Naive thymus-derived CD4-positive, alpha-beta T cell (primary cell): ENCODE measurements at regions of chr11 and their contacts with region 1.

Region 1: GRCh38 chr11:32893343-32894148 is 935 bp downstream of the QSER1 start:
- DNase-seq: peak in 6 of 9 donors; percentile 34 to 67 (median 42)
- ATAC-seq: peak; percentile 47
- H3K4me3 ChIP-seq: peak overlapping the region; percentile 71
- H3K4me3 Mint-ChIP-seq: peak overlapping the region; percentile 83 to 96 (median 94)
- H3K27ac ChIP-seq: peak overlapping the region; percentile 71
- H3K27ac Mint-ChIP-seq: peak overlapping the region; percentile 58 to 95 (median 80)
- H3K4me1 ChIP-seq: peaks cover 5 to 15% of the 10 kb centered on the region in 2 donors
- H3K4me1 Mint-ChIP-seq: peaks cover 26 to 46% (median 38%) of the 10 kb centered on the region in 7 donors
- H3K27me3 ChIP-seq: no peaks in the 10 kb centered on the region
- H3K27me3 Mint-ChIP-seq: peaks cover 0 to 21% (median 0%) of the 10 kb centered on the region in 5 donors

Region 2: GRCh38 chr11:32792948-32793475 is 100.5 kb before region 1 on chr11:
- CTCF ChIA-PET with region 1: no interaction called
- POLR2A ChIA-PET with region 1: interaction called, 3 read pairs
- intact Hi-C with region 1: loop called in 1 of 2 experiments (anchors 1 kb)
- DNase-seq: peak; percentile 30 to 60 (median 49)
- ATAC-seq: peak; percentile 82
- H3K4me3 ChIP-seq: peak overlapping the region; percentile 38
- H3K4me3 Mint-ChIP-seq: peak overlapping the region in 7 of 10 donors; percentile 48 to 80 (median 56)
- H3K27ac ChIP-seq: no peak overlapping the region
- H3K27ac Mint-ChIP-seq: peak overlapping the region in 1 of 9 donors; percentile 59
- H3K4me1 ChIP-seq: no peaks in the 10 kb centered on the region
- H3K4me1 Mint-ChIP-seq: peaks cover 0 to 8% (median 5%) of the 10 kb centered on the region in 7 donors
- H3K27me3 ChIP-seq: no peaks in the 10 kb centered on the region
- H3K27me3 Mint-ChIP-seq: peaks cover 4 to 31% (median 9%) of the 10 kb centered on the region in 5 donors

Region 3: GRCh38 chr11:32960553-32961164 is 67.1 kb after region 1 on chr11:
- CTCF ChIA-PET with region 1: no interaction called
- POLR2A ChIA-PET with region 1: no interaction called
- intact Hi-C with region 1: loop called in 1 of 2 experiments (anchors 5 kb)
- DNase-seq: peak in 7 of 9 donors; percentile 33 to 66 (median 55)
- ATAC-seq: peak; percentile 67
- H3K4me3 ChIP-seq: no peak overlapping the region
- H3K4me3 Mint-ChIP-seq: no peak overlapping the region
- H3K27ac ChIP-seq: no peak overlapping the region
- H3K27ac Mint-ChIP-seq: no peak overlapping the region
- H3K4me1 ChIP-seq: no peaks in the 10 kb centered on the region
- H3K4me1 Mint-ChIP-seq: peaks cover 0 to 5% (median 0%) of the 10 kb centered on the region in 7 donors
- H3K27me3 ChIP-seq: no peaks in the 10 kb centered on the region
- H3K27me3 Mint-ChIP-seq: no peaks in the 10 kb centered on the region

Region 4: GRCh38 chr11:33065445-33066178 is 172.1 kb after region 1 on chr11:
- CTCF ChIA-PET with region 1: interaction called, 3 read pairs
- POLR2A ChIA-PET with region 1: no interaction called
- intact Hi-C with region 1: loop called in 1 of 2 experiments (anchors 2 kb)
- DNase-seq: peak; percentile 62 to 83 (median 76)
- ATAC-seq: peak; percentile 91
- H3K4me3 ChIP-seq: no peak overlapping the region
- H3K4me3 Mint-ChIP-seq: peak overlapping the region in 2 of 10 donors; percentile 42 to 43
- H3K27ac ChIP-seq: no peak overlapping the region
- H3K27ac Mint-ChIP-seq: peak overlapping the region in 4 of 9 donors; percentile 14 to 83 (median 58)
- H3K4me1 ChIP-seq: peaks cover 0 to 21% of the 10 kb centered on the region in 2 donors
- H3K4me1 Mint-ChIP-seq: peaks cover 24 to 36% (median 29%) of the 10 kb centered on the region in 7 donors
- H3K27me3 ChIP-seq: no peaks in the 10 kb centered on the region
- H3K27me3 Mint-ChIP-seq: no peaks in the 10 kb centered on the region

Region 5: DNA sequence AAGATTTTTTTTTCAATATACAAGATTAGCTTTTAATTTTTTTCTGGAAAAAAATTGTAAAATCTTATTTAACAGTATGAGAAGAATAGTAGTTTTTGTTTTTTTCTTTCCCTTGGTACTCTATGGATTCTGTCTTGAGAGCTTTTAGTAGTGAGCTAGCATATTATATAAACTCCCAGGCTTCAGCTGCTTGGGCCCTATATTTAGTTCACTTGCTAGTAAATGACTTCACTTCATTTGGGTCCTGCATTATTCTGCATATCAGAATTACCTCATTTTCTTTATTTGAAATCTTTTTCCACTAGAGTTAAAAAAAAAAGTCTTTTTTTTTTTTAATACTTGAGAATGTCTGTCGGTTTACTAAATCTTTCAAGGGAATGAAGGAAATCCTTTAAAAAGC is 396.8 kb after region 1 on chr11:
- CTCF ChIA-PET with region 1: no interaction called
- POLR2A ChIA-PET with region 1: no interaction called
- intact Hi-C with region 1: no loop called
- DNase-seq: no peak
- ATAC-seq: no peak
- H3K4me3 ChIP-seq: no peak overlapping the region
- H3K4me3 Mint-ChIP-seq: no peak overlapping the region
- H3K27ac ChIP-seq: no peak overlapping the region
- H3K27ac Mint-ChIP-seq: no peak overlapping the region
- H3K4me1 ChIP-seq: no peaks in the 10 kb centered on the region
- H3K4me1 Mint-ChIP-seq: peaks cover 3 to 51% (median 43%) of the 10 kb centered on the region in 7 donors
- H3K27me3 ChIP-seq: no peaks in the 10 kb centered on the region
- H3K27me3 Mint-ChIP-seq: no peaks in the 10 kb centered on the region

Region 6: GRCh38 chr11:33773987-33774735 is 880.6 kb after region 1 on chr11 and contains the start of gene FBXO3:
- CTCF ChIA-PET with region 1: no interaction called
- POLR2A ChIA-PET with region 1: no interaction called
- intact Hi-C with region 1: loop called (anchors 1 kb)
- DNase-seq: peak; percentile 71 to 91 (median 88)
- ATAC-seq: peak; percentile 98
- H3K4me3 ChIP-seq: peak within 1 kb of the TSS; percentile 91
- H3K4me3 Mint-ChIP-seq: peak within 1 kb of the TSS; percentile 93 to 99 (median 97)
- H3K27ac ChIP-seq: peak within 1 kb of the TSS; percentile 83
- H3K27ac Mint-ChIP-seq: peak within 1 kb of the TSS; percentile 93 to 98 (median 96)
- H3K4me1 ChIP-seq: peaks cover 20 to 23% of the 10 kb centered on the region in 2 donors
- H3K4me1 Mint-ChIP-seq: peaks cover 33 to 58% (median 45%) of the 10 kb centered on the region in 7 donors
- H3K27me3 ChIP-seq: no peaks in the 10 kb centered on the region
- H3K27me3 Mint-ChIP-seq: peaks cover 0 to 34% (median 7%) of the 10 kb centered on the region in 5 donors
- total RNA-seq, gene FBXO3: 22.6 to 55.7 (median 47.7) TPM

Region 7: GRCh38 chr11:34288492-34288891 is 1394.9 kb after region 1 on chr11:
- CTCF ChIA-PET with region 1: no interaction called
- POLR2A ChIA-PET with region 1: no interaction called
- intact Hi-C with region 1: no loop called
- DNase-seq: no peak
- ATAC-seq: no peak
- H3K4me3 ChIP-seq: no peak overlapping the region
- H3K4me3 Mint-ChIP-seq: no peak overlapping the region
- H3K27ac ChIP-seq: no peak overlapping the region
- H3K27ac Mint-ChIP-seq: no peak overlapping the region
- H3K4me1 ChIP-seq: no peaks in the 10 kb centered on the region
- H3K4me1 Mint-ChIP-seq: no peaks in the 10 kb centered on the region
- H3K27me3 ChIP-seq: no peaks in the 10 kb centered on the region
- H3K27me3 Mint-ChIP-seq: peaks cover 0 to 11% (median 0%) of the 10 kb centered on the region in 5 donors